Ascending aorta (tissue), 2 donors: ENCODE measurements at regions of chr20 and their contacts with region 1.

Region 1: DNA sequence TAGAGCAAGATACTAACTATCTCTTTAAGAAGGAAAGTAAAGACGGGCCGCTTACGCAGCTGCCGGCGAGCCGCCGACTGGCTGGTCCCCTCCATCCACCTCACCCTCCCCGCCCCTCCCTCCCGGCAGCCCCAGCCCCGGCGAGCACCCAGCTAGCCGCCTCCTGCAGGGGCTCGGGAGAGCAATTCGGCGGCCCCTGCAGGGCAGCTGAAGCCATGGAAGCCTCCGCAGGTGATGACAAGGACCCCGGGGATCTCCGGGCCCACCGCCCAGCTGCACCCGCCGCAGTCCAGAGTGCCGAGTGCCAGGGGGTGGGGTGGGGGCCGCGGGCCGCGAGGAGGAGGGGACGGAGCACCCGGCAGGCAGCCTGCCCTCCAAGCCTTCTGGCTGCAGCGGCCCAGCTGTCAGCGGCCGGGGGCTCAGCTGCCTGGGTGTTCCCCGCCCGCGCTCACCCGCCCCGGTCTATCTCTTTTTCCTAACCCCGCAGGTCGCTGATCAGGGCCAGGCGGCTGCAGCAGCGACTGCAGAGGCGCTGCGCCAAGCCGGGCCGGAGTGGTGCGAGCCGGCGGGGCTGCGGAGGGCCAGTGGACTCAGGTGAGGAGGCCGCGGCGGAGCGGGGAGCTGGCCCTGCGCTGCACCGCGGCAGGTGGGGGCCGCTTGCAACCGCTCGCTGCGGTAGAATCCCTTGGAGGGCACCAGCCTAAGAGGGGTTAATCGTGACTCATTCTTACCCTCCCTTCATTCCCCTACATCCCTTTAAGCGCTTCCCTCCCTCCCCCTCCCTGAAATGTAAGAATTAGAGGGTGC is at the start of gene SNPH:
- DNase-seq: peak in 1 of 2 donors; percentile 86
- H3K4me3 ChIP-seq: peak within 1 kb of the TSS; percentile 84 to 98
- H3K27ac ChIP-seq: peak within 1 kb of the TSS; percentile 58 to 66
- H3K4me1 ChIP-seq: peaks cover 5 to 11% of the 10 kb centered on the region in 2 donors
- H3K27me3 ChIP-seq: no peaks in the 10 kb centered on the region
- CTCF ChIP-seq: no peak
- total RNA-seq, gene SNPH: 10.4 TPM

Region 2: GRCh38 chr20:750801-751200 is 515.6 kb before region 1 on chr20:
- intact Hi-C with region 1: no loop called
- DNase-seq: no peak
- H3K4me3 ChIP-seq: no peak overlapping the region
- H3K27ac ChIP-seq: no peak overlapping the region
- H3K4me1 ChIP-seq: no peaks in the 10 kb centered on the region
- H3K27me3 ChIP-seq: no peaks in the 10 kb centered on the region
- CTCF ChIP-seq: no peak

Region 3: GRCh38 chr20:1392823-1393506 is 126.6 kb after region 1 on chr20 and contains the start of gene FKBP1A:
- intact Hi-C with region 1: loop called (anchors 2 kb)
- DNase-seq: peak; percentile 51 to 94
- H3K4me3 ChIP-seq: peak within 1 kb of the TSS; percentile 80 to 92
- H3K27ac ChIP-seq: peak within 1 kb of the TSS; percentile 84 to 86
- H3K4me1 ChIP-seq: peaks cover 13 to 41% of the 10 kb centered on the region in 2 donors
- H3K27me3 ChIP-seq: no peaks in the 10 kb centered on the region
- CTCF ChIP-seq: peak in 2 of 3 experiments; percentile 13 to 19
- total RNA-seq, gene FKBP1A: 202 TPM